ENCODE measurements at regions of chr14 and their contacts with region 1.

Region 1: DNA sequence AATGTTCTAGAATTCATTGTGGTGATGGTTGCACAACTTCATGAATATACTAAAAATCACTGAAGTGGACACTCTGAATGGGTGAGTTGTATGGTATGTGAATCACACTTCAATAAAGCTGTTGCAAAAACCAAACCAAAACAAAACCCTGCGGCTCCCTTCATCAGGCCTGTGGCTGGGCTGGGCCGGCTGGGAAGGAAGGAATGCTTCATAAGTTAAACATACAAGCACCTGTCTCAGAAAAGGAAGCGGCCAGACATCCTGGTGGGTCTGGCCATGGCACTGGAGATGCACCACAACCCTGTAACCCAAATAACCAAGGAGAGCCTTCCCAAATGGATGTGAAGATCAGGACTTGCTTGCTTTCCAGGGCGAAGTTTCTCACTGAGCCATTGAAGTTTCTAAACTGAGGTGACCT is 34.9 kb downstream of the TTC7B start:
- H3K4me3 Mint-ChIP-seq: no peak overlapping the region
- H3K27ac Mint-ChIP-seq: no peak overlapping the region
- H3K4me1 Mint-ChIP-seq: peaks cover 11% of the 10 kb centered on the region
- H3K27me3 Mint-ChIP-seq: no peaks in the 10 kb centered on the region

Region 2: DNA sequence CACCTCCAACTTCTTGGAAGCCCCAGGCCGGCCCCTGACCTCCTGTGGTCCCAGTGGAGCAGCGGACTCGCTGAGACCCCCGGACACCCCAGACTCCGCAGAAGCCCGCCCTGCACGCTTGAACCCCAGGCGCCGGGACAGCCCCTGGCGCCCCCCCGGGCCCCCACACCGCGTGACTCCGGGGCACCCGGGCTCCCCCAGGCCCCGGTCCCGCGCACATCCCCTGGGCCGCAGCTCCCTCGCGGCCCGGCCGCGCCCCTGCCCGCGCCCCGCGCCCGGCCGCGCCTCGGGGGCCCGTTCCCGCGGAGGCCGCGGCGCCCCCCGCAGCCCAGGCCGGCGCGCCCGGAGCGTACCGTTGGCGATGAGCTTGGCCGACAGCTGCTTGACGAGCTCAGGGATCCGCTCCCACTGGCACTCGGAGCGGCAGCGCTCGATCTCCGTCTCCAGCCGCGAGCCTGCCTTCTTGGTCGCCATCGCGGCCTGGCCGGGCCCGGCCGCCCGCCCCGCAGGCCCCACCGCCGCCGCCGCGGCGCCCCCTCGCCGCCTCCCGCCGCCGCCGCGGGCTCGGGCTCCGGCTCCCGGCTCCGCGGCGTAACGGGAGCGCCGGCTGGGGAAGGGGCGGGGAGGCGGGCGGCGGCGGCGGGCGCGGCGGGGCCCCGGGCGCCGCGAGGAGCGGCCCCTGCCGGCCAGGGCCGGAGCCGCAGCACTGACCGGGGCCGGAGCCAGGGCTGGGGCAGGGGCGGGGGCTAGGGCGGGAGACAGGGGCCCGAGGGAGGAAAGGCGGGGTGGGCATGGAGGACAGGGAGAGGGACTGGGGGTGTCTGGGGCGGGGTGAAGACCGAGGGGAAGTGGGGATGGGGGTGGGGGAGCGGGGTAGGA is 34.7 kb after region 1 on chr14 and contains the start of gene TTC7B:
- intact Hi-C with region 1: loop called (anchors 5 kb)
- H3K4me3 Mint-ChIP-seq: peak within 1 kb of the TSS; percentile 74
- H3K27ac Mint-ChIP-seq: peak within 1 kb of the TSS; percentile 33
- H3K4me1 Mint-ChIP-seq: peaks cover 35% of the 10 kb centered on the region
- H3K27me3 Mint-ChIP-seq: peaks cover 26% of the 10 kb centered on the region

Measured in dendritic cell treated with granulocyte-macrophage colony-stimulating factor and Interleukin-4, amounts not matched to agents 40 ng/mL and 50 ng/mL, for 4 days (primary cell).